Left ventricle myocardium superior (tissue), 1 donor: ENCODE measurements at regions of chr14 and their contacts with region 1.

Region 1: GRCh38 chr14:36553656-36554260 is 28.7 kb downstream of the NKX2-8 start:
- DNase-seq: no peak
- ATAC-seq: no peak

Region 2: GRCh38 chr14:36941783-36942521 is 388.2 kb after region 1 on chr14:
- intact Hi-C with region 1: loop called (anchors 10 kb)
- DNase-seq: peak; percentile 80
- ATAC-seq: peak; percentile 74